Gastrocnemius medialis (tissue), 4 donors: ENCODE measurements at regions of chr1 and their contacts with region 1.

Region 1: GRCh38 chr1:212608209-212608955 is at the start of gene ATF3:
- DNase-seq: peak; percentile 100
- ATAC-seq: peak; percentile 81 to 93
- H3K4me3 ChIP-seq: peak within 1 kb of the TSS; percentile 76 to 92 (median 80)
- H3K27ac ChIP-seq: peak within 1 kb of the TSS; percentile 90 to 95 (median 93)
- H3K4me1 ChIP-seq: peaks cover 14 to 22% of the 10 kb centered on the region in 2 donors
- H3K27me3 ChIP-seq: peaks cover 21 to 39% (median 31%) of the 10 kb centered on the region in 3 donors
- CTCF ChIP-seq: no peak
- POLR2A ChIP-seq: peak; percentile 99
- total RNA-seq, gene ATF3: 1.9 to 7.4 (median 7.2) TPM

Region 2: DNA sequence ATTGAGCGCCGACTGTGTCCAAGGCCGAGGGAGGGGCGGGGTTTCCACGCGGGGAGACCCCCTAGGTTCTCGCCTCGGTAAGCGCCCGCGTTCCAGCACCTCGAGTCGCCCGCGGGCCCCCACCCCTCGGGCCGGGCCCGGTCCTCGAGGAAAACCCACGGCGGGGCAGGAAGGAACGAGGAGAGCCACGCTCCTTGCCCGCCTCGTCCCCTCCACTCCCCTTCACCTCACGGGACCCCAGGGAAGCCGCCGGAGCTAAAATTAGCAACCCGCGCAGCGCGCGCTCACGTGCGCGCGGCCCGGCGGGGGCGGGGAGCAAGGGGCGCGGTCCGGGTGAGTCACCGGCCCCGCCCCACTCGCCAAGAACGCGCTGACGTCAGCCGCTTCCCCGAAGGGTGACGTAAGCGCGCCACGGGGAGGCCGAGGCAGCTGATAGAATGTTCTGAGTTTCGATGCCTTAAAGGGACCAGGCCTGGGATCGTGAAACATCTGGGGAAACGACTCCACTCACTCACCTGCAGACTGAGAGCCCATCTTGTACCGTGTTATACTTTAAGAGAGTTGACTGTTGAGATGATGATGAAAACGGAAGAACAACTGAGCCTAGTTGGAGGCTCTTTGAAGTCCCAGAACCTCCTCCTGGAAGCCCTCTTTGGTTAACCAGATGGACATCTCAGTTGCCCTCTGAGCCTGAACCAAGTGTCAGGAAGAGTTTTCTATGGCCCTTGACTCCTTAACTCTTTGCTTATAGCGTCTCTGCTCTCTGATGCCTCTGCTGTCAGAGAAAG is 49.5 kb before region 1 on chr1:
- in situ Hi-C with region 1: loop called in 1 of 4 experiments (anchors 5 kb)
- intact Hi-C with region 1: loop called (anchors 1 kb)
- DNase-seq: peak; percentile 76 to 92
- ATAC-seq: peak; percentile 91 to 92
- H3K4me3 ChIP-seq: peak overlapping the region; percentile 65 to 82 (median 76)
- H3K27ac ChIP-seq: peak overlapping the region; percentile 75 to 94 (median 90)
- H3K4me1 ChIP-seq: no peaks in the 10 kb centered on the region
- H3K27me3 ChIP-seq: no peaks in the 10 kb centered on the region
- CTCF ChIP-seq: no peak
- POLR2A ChIP-seq: peak; percentile 80 to 94

Region 3: DNA sequence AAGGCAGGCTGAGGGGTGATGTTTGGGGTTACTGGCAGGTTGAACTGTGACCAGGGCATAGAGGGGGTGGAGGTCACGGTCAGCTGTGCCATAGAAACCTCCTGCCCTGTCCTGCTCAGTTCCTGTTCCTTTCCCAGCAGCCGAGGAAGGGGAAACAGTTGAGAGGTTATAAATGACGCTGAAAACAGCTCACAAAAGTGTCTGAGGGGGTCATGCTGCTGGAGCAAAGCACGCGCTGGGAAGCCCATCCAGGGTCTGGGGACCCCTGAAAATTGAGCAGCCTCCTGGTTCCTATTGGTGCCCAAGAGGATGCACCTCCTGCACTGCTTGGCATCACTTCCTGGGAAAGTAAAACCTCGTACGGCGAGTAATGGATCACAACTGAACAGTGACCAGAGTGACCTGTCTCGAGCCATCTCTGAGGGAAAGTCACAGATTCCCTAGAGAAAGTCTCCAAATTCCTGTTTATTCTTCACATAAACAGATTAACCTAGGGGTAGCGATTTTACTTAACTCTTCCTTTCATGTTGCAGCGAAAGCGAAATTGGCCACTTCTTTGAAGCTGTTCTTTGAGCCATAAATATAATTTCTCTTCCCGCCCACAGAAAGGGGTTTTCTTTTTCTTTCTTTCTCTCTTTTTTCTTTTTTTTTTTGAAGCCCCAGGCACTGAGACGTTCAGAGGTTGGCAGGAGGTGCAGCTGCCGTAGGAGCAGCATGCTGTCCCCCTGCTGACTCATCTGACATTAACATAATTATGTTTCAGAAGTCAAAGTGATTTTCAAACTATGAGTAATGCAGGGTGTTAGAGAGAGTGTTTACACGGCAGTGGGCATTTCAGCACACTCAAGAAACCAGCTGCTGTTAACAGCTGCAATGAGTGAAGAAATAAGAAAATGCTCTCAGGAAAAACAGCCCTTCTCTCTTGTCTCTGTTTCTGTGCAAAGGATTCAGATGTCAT is 41.6 kb before region 1 on chr1:
- in situ Hi-C with region 1: loop called in 1 of 4 experiments (anchors 5 kb)
- intact Hi-C with region 1: loop called (anchors 2 kb)
- DNase-seq: no peak
- ATAC-seq: peak; percentile 89 to 90
- H3K4me3 ChIP-seq: peak overlapping the region; percentile 59 to 63 (median 61)
- H3K27ac ChIP-seq: peak overlapping the region; percentile 46 to 84 (median 73)
- H3K4me1 ChIP-seq: peaks cover 7 to 13% of the 10 kb centered on the region in 2 donors
- H3K27me3 ChIP-seq: no peaks in the 10 kb centered on the region
- CTCF ChIP-seq: no peak
- POLR2A ChIP-seq: peak; percentile 34 to 62

Region 4: GRCh38 chr1:212782422-212783154 is 174.2 kb after region 1 on chr1:
- in situ Hi-C with region 1: no loop called
- intact Hi-C with region 1: no loop called
- DNase-seq: no peak
- ATAC-seq: no peak
- H3K4me3 ChIP-seq: no peak overlapping the region
- H3K27ac ChIP-seq: no peak overlapping the region
- H3K4me1 ChIP-seq: no peaks in the 10 kb centered on the region
- H3K27me3 ChIP-seq: no peaks in the 10 kb centered on the region
- CTCF ChIP-seq: peak in 4 of 5 experiments; percentile 26 to 48 (median 43)
- POLR2A ChIP-seq: no peak